Tibial artery (tissue), 4 donors: ENCODE measurements at regions of chr1 and their contacts with region 1.

Region 1: DNA sequence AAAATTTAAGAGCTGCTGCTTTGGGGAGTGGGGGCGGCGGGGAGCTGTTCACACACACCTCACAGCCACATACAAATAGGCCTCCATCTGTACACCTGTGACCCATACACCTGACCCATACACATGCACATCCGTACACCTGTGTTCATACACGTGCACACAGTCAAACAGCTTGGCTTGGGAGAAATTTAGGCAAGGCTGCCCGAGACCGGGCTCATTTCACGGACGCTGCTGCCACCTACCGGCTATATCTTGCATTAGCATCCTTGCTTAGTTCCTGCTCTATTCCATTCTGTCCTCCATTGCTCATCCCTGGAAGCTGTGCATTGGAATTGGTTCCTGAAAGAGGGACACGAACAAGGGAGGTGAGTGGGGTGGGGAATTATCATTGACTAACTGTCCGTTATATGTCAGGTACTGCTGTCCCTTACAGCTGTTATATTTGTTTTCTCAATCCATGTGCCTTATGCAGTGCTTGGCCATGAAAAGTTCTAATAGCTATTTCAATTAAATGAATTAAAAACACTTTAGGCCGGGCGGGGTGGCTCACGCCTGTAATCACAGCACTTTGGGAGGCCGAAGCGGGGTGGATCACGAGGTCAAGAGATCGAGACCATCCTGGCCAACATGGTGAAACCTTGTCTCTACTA is 37.1 kb upstream of the EPB41 start:
- DNase-seq: peak; percentile 63 to 80
- H3K4me3 ChIP-seq: no peak overlapping the region
- H3K27ac ChIP-seq: no peak overlapping the region
- H3K4me1 ChIP-seq: peaks cover 0 to 2% (median under 1%) of the 10 kb centered on the region in 4 donors
- H3K27me3 ChIP-seq: peaks cover 0 to 7% of the 10 kb centered on the region in 2 donors
- CTCF ChIP-seq: peak; percentile 87 to 94

Region 2: DNA sequence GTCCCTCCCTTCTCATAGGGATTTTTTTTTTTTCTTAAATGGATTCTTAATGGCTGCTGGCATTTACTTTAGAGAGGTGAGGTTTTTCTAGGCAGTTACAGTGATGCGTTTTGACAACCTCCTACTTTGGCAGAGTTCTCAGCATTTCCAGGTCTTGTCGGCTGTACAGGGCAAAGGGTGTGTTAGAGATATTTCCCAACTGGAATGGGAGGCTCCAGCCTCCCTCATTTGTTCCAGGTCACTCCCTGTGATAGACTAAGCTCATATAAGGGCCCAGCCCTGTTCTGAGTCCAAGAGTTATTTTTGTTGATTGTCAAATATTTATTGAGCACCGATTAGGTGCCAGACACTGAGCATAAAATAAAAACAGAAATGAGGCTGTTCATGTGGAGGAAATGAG is 925.1 kb before region 1 on chr1:
- intact Hi-C with region 1: no loop called
- DNase-seq: no peak
- H3K4me3 ChIP-seq: no peak overlapping the region
- H3K27ac ChIP-seq: no peak overlapping the region
- H3K4me1 ChIP-seq: no peaks in the 10 kb centered on the region
- H3K27me3 ChIP-seq: no peaks in the 10 kb centered on the region
- CTCF ChIP-seq: no peak

Region 3: GRCh38 chr1:28642847-28643635 is 234.2 kb before region 1 on chr1 and contains the start of gene TAF12:
- intact Hi-C with region 1: loop called (anchors 10 kb)
- DNase-seq: peak; percentile 91 to 95
- H3K4me3 ChIP-seq: peak within 1 kb of the TSS; percentile 67 to 74
- H3K27ac ChIP-seq: peak within 1 kb of the TSS; percentile 79 to 89
- H3K4me1 ChIP-seq: peaks cover 0 to 36% (median 26%) of the 10 kb centered on the region in 4 donors
- H3K27me3 ChIP-seq: no peaks in the 10 kb centered on the region
- CTCF ChIP-seq: peak; percentile 38 to 41

Region 4: GRCh38 chr1:28779751-28780408 is 97.4 kb before region 1 on chr1:
- intact Hi-C with region 1: loop called (anchors 2 kb)
- DNase-seq: peak in 1 of 2 donors; percentile 9
- H3K4me3 ChIP-seq: no peak overlapping the region
- H3K27ac ChIP-seq: no peak overlapping the region
- H3K4me1 ChIP-seq: peaks cover 0 to 11% (median 7%) of the 10 kb centered on the region in 4 donors
- H3K27me3 ChIP-seq: no peaks in the 10 kb centered on the region
- CTCF ChIP-seq: no peak

Region 5: GRCh38 chr1:28822788-28823187 is 54.5 kb before region 1 on chr1:
- intact Hi-C with region 1: no loop called
- DNase-seq: no peak
- H3K4me3 ChIP-seq: no peak overlapping the region
- H3K27ac ChIP-seq: no peak overlapping the region
- H3K4me1 ChIP-seq: no peaks in the 10 kb centered on the region
- H3K27me3 ChIP-seq: peaks cover 0 to 34% of the 10 kb centered on the region in 2 donors
- CTCF ChIP-seq: no peak